Lower leg skin (tissue), 4 donors: ENCODE measurements at regions of chr7 and their contacts with region 1.

Region 1: GRCh38 chr7:75702515-75702914 is 36.2 kb downstream of the HIP1 start:
- DNase-seq: no peak
- H3K4me3 ChIP-seq: no peak overlapping the region
- CTCF ChIP-seq: no peak
- POLR2A ChIP-seq: no peak

Region 2: DNA sequence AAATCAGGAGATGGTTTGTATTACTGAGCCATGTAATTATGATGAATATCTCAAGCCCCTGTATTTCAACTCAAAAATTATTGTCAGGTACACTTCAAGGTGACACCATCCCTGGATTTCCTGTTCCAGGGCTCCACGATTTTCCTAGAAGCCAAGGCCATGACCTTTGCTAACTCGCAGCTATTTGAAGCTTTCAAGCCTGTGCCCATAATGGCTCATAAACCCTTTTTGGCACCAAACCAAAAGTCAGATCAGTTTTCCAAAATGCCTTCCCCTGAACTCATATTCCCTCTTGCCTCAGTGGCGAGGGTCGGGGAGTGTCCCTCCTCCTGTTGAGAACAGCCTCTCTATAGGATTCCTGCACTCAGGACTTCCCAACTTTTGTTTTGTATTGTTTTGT is 34.6 kb before region 1 on chr7:
- intact Hi-C with region 1: loop called (anchors 2 kb)
- DNase-seq: no peak
- H3K4me3 ChIP-seq: no peak overlapping the region
- CTCF ChIP-seq: no peak
- POLR2A ChIP-seq: no peak